ENCODE measurements at regions of chr12 and their contacts with region 1.

Region 1: GRCh38 chr12:61563665-61564450 is 696.3 kb upstream of the USP15 start:
- DNase-seq: no peak
- H3K4me3 ChIP-seq: no peak overlapping the region
- H3K27ac ChIP-seq: no peak overlapping the region
- H3K27me3 ChIP-seq: no peaks in the 10 kb centered on the region
- CTCF ChIP-seq: no peak

Region 2: DNA sequence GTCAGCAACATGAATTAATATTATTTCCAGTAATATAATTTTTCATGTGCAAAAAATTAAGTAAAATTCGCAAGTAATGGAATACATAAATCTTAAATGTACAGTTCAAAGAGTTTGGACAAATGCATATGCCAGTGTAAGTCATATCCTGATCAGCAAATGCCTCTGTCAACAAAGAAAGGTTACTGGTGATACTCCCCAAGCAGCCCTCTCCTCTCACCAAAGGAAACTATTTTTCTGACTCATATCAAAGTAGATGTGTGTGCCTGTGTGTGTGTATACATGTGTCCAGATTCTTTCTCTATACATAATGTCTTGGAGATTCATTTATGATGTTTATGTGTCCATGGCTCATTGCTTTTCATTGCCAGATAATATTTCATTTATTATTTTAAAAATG is 933.1 kb before region 1 on chr12:
- intact Hi-C with region 1: no loop called
- DNase-seq: no peak
- H3K4me3 ChIP-seq: no peak overlapping the region
- H3K27ac ChIP-seq: no peak overlapping the region
- H3K27me3 ChIP-seq: no peaks in the 10 kb centered on the region
- CTCF ChIP-seq: no peak

Region 3: DNA sequence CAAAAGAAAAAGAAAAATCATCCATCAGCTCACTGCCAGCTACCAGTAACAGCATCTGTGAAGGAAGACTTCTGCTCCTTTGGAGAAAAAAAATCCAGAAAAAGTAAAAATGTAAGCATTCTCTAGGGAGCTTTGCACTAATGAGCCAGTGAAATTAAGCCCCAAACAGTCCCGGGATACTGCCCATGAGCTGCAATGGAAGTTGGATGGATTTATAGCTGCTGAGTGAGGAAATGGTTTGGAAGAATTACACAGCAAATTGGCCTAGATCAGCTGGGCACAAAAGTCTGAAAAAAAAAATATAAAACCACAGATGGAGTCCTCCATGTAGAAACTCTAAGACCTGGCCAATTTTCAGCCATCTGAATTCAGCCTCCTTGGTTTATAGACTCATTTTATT is 233.4 kb after region 1 on chr12:
- intact Hi-C with region 1: loop called in 1 of 2 experiments (anchors 10 kb)
- DNase-seq: no peak
- H3K4me3 ChIP-seq: no peak overlapping the region
- H3K27ac ChIP-seq: peak overlapping the region in 40 of 59 donors; percentile 1 to 78 (median 29)
- H3K27me3 ChIP-seq: no peaks in the 10 kb centered on the region
- CTCF ChIP-seq: no peak